OCI-LY7 (cell line): ENCODE measurements at regions of chr1 and their contacts with region 1.

Region 1: DNA sequence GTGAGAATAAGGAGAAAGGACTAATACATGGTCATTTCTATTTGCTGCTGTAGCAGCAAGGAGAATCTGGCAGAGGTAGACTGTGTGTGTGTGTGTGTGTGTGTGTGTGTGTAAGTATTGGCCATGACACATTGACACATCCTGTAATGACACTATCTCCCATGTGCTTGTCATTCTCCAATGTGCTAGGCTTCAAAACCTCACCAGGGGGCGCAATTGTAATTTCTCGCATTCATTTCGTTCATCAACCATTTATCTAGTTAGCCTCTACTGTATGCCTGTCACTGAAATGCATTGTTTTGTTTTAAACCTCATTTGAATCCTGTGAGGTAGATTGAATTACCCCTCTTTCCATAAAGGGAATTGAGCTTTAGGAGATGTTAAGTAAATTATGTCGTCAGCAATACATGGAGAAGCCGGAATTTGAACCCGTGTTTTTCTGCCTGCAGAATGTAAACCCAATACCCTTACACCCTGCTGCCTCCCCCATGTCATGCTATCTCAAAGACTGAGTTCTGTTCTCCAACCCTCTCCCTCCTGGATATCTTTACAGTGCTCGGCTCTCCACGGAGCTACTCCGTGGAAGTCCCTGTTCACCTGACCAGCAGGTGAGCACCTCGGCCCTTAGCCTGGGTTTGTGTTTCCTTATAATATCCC is 100.8 kb downstream of the UCK2 start:
- DNase-seq: peak; percentile 67
- H3K4me3 ChIP-seq: no peak overlapping the region
- H3K27ac ChIP-seq: no peak overlapping the region
- H3K4me1 ChIP-seq: peaks cover 4% of the 10 kb centered on the region
- CTCF ChIP-seq: peak; percentile 91

Region 2: GRCh38 chr1:165162671-165163241 is 765.4 kb before region 1 on chr1:
- CTCF ChIA-PET with region 1: no interaction called
- POLR2A ChIA-PET with region 1: no interaction called
- intact Hi-C with region 1: no loop called
- DNase-seq: no peak
- H3K4me3 ChIP-seq: no peak overlapping the region
- H3K27ac ChIP-seq: no peak overlapping the region
- H3K4me1 ChIP-seq: no peaks in the 10 kb centered on the region
- CTCF ChIP-seq: no peak

Region 3: DNA sequence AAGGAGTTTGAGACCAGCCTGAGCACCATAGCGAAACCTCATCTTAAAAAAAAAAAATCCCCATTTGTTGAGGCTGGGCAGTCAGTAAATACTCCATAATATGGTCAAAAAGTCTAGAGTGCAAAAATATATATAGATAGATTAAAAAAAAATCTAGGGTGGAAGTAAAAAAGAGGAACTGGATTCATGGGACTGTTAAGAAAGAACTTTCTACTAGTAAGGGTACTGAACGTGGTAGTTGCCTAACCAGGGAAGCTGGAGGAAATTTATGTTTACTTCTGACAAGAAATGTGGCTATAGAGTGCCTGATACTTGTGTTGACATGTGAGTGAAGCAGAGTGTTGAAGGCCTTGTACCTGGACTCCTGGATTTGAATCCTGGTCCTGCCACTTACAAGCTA is 504.5 kb after region 1 on chr1:
- CTCF ChIA-PET with region 1: no interaction called
- POLR2A ChIA-PET with region 1: no interaction called
- intact Hi-C with region 1: loop called (anchors 1 kb)
- DNase-seq: no peak
- H3K4me3 ChIP-seq: no peak overlapping the region
- H3K27ac ChIP-seq: no peak overlapping the region
- H3K4me1 ChIP-seq: no peaks in the 10 kb centered on the region
- CTCF ChIP-seq: no peak

Region 4: GRCh38 chr1:166479052-166479631 is 550.9 kb after region 1 on chr1:
- CTCF ChIA-PET with region 1: no interaction called
- POLR2A ChIA-PET with region 1: no interaction called
- intact Hi-C with region 1: loop called (anchors 5 kb)
- DNase-seq: peak; percentile 54
- H3K4me3 ChIP-seq: no peak overlapping the region
- H3K27ac ChIP-seq: no peak overlapping the region
- H3K4me1 ChIP-seq: no peaks in the 10 kb centered on the region
- CTCF ChIP-seq: peak; percentile 95